ENCODE measurements at regions of chr19 and their contacts with region 1.

Region 1: GRCh38 chr19:3035542-3036118 is 6.5 kb upstream of the TLE2 start:
- DNase-seq: peak; percentile 79 to 99 (median 95)
- ATAC-seq: peak; percentile 88 to 92
- H3K4me3 Mint-ChIP-seq: peak overlapping the region; percentile 87 to 97 (median 93)
- H3K27ac Mint-ChIP-seq: peak overlapping the region; percentile 82 to 99 (median 98)
- H3K4me1 Mint-ChIP-seq: peaks cover 28 to 44% (median 36%) of the 10 kb centered on the region in 4 donors
- H3K27me3 Mint-ChIP-seq: peaks cover 0 to 4% (median 0%) of the 10 kb centered on the region in 5 donors

Region 2: GRCh38 chr19:2977001-2977685 is 58.5 kb before region 1 on chr19 and contains the start of gene TLE6:
- POLR2A ChIA-PET with region 1: interaction called, 27 read pairs
- DNase-seq: peak; percentile 86 to 97 (median 94)
- ATAC-seq: peak; percentile 99
- H3K4me3 Mint-ChIP-seq: peak within 1 kb of the TSS; percentile 93 to 98 (median 97)
- H3K27ac Mint-ChIP-seq: peak within 1 kb of the TSS; percentile 48 to 95 (median 86)
- H3K4me1 Mint-ChIP-seq: peaks cover 12 to 24% (median 19%) of the 10 kb centered on the region in 4 donors
- H3K27me3 Mint-ChIP-seq: peaks cover 2 to 10% (median 5%) of the 10 kb centered on the region in 5 donors
- polyA plus RNA-seq, gene TLE6: 0.52 to 0.82 TPM in 2 of 3 donors, not detected in the other

Region 3: DNA sequence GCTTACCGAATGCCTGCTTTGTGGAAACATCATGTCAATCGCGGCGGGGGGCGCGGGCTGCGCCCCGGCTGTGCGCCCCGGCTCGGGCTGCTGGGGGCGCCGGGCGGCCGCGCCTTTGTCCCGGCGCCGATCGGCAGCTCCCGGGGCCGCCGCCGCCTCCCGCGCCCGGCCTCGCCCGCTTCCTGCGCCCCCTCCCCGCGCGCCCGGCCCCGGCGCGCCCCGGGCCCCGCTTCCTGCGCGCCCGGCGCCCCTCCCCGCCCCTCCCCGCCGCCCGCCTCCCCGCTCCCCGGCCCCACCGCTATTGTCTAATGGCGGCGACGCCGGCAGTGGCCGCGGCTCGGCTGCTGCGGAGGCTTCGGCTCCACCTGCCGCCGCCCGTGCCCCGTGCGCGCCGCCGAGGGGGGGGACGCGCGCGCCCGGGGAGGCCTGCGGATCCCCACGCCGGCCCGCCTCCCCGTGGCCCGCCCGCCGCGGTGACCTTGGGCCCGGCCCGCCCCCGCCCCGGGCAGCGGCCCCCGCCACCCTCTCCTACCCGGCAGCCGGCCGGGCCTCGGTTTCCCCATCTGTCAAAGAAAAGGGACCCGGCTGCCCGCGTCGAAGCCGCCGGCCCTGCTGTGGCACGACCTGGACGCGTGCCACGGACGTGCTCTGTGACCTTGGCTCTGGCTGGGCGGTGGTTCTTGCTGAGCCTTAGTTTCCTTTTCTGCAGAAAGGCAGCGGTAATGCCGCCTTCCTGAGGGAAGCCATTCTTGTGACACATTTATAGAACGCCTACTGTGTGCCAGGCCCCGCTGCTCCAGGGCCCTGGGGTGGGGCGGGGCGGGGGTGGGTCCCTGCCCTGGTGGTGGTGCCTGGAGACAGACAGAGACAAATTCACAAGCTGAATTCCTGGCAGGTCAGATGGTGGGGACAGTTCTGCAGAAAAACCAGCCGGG is 26.8 kb after region 1 on chr19 and contains the start of gene TLE5:
- POLR2A ChIA-PET with region 1: interaction called, 519 read pairs
- DNase-seq: peak; percentile 64 to 86 (median 72)
- ATAC-seq: peak; percentile 55 to 61
- H3K4me3 Mint-ChIP-seq: peak within 1 kb of the TSS; percentile 80 to 99 (median 91)
- H3K27ac Mint-ChIP-seq: peak within 1 kb of the TSS; percentile 91 to 98 (median 95)
- H3K4me1 Mint-ChIP-seq: peaks cover 14 to 61% (median 36%) of the 10 kb centered on the region in 4 donors
- H3K27me3 Mint-ChIP-seq: no peaks in the 10 kb centered on the region
- polyA plus RNA-seq, gene TLE5: 451 to 924 (median 555) TPM

Region 4: DNA sequence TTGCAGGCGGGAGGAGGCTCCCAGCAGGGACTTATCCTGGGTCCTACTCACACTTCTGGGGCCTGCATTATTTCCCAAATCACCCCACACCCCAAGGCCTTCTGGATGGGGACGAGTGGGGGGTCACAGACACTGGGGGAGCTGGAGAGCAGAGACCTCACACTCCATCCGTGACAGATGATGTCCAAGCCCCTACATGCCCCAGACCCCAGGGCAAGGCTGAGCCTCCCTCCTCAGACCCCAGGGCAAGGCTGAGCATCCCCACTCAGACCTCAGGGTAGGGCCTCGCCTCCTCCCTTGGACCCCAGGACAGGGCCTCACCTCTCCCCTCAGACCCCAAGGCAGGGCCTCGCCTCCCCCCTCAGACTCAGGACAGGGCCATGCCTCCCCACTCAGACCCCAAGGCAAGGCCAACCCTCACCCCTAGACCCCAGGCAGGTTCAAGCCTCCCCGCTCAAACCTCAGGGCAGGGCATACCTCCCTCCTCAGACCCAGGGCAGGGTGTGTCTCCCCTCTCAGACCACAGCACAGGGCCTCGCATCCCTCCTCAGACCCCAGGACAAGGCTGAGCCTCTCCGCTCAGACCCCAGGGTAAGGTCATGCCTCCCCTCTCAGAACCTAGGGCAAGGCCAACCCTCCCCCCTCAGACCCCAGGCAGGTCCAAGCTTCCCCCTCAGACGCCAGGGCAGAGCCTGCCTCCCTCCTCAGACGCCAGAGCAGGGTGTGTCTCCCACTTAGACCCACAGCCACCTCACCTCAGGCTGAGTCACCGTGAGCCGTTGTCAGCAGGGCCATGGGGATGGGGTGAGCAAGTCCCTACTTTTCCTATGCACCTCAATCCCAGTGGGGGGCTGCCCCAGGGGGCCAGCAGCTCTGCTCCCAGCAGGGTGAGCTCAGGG is 141.2 kb after region 1 on chr19:
- POLR2A ChIA-PET with region 1: interaction called, 21 read pairs
- DNase-seq: peak in 7 of 10 donors; percentile 41 to 82 (median 53)
- ATAC-seq: peak; percentile 45 to 56
- H3K4me3 Mint-ChIP-seq: peak overlapping the region; percentile 72 to 91 (median 87)
- H3K27ac Mint-ChIP-seq: peak overlapping the region; percentile 80 to 99 (median 96)
- H3K4me1 Mint-ChIP-seq: peaks cover 12 to 40% (median 27%) of the 10 kb centered on the region in 4 donors
- H3K27me3 Mint-ChIP-seq: no peaks in the 10 kb centered on the region

Measured in naive thymus-derived CD8-positive, alpha-beta T cell (primary cell).